Cardiac septum (tissue), 1 donor: ENCODE measurements at regions of chr11 and their contacts with region 1.

Region 1: GRCh38 chr11:126310228-126310991 is 6.5 kb downstream of the DCPS start:
- DNase-seq: peak; percentile 85

Region 2: DNA sequence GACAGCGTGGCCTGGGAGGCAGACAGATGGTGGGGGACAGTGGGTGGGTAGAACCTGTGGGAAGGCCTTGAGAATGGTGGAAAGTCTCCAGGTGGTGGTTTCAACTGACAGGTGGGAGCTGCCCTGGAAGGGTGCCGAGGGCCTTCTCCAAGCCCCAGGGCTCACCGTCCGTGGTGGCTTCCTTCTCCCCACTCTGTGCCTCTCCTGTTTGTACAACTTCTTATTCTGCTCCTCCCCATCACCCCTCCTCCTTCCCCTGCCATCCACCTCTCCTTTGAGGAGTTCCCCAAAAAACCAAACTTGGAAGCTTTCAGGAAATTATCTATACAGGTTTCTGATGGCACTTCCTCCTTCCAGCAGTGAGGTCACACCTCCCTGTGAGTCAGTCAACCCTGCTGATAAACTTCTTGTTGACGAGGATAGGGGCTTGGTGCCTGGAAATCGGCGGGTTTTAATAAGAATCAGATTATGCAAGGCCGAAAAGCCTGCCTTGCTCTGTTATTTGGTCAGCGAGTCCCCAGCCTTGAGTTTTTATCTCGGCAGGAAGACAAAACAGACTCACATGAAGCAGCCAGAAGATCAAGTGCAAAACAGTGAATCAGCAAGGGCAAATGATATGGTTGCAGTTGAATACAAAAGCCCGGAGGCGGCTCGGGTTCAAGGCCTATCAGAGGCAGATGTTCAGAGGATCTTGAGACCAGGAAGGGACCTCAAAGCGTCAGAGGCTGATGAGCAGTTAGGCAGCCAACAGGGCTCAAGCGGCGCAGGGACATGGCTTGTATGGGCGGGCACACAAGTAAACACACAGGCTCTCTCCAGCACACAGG is 35.6 kb after region 1 on chr11:
- intact Hi-C with region 1: loop called (anchors 5 kb)
- DNase-seq: peak; percentile 87

Region 3: DNA sequence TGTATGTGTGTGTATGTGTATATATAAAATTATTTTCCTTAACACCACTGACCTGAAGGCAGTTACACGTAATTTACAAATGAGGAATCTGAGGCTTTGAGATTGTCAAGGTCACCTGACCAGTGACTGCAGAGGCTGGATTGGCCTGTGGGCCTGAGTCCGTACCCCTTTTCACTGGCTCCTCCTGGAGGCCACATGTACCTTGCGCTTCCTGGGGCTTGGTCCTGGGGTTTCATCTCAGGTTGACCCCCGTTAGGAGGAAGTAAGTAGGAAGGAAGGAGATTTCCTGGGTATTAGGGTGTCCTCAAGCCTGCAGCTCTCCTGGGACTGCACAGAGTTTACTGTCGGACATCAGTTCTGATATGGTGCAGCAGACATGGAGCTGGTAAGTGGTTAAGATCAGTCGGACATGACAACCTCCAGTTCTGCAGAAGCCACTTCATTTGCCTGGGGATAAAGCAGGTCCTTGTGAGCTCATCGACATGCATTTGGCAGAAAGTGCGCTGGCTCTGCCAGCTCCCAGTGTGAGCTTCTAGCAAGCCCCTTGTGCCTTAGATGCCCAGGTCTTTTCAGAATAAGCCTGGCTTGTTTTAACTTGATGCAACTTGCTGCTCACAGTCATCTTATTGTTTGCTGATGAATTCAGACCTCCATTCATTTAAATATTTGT is 81.7 kb after region 1 on chr11:
- intact Hi-C with region 1: loop called (anchors 5 kb)
- DNase-seq: peak; percentile 74

Region 4: DNA sequence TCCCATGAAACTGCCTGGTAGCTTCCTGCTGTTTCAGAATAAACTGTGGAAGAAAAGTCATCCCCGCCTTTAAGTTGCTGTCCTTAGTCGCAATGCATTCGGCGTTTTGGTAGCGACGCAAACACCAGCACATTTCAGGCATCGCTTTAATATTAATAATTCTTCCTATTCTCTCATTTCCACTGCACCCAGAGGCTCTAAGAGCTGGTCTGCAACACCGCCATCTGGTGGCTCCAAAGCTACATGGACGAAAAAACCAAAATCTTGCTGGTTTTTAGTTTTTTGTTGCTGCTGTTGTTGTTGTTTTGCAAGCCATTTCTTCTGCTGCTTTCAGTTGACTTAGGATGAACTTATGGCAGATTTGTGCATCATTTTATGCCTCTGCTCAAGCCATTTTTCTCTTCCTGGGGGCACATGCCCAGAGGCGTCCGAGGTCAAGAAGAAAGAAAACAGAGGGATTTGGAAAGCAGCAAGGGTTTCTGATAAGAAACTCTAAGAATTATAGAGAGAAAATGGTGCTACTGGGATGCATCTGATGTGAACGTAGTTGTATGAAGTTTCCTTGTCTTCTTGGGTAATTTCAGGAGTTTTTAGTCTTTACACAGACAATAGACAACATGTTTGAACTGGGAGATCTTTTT is 1035.5 kb after region 1 on chr11:
- intact Hi-C with region 1: loop called (anchors 5 kb)
- DNase-seq: no peak